ENCODE measurements at regions of chr1 and their contacts with region 1.

Region 1: GRCh38 chr1:94926915-94927404 is at the start of gene CNN3:
- DNase-seq: peak; percentile 61 to 96
- H3K4me3 ChIP-seq: peak within 1 kb of the TSS; percentile 91 to 98
- H3K27ac ChIP-seq: peak within 1 kb of the TSS; percentile 99 to 100
- H3K4me1 ChIP-seq: peaks cover 9 to 40% of the 10 kb centered on the region in 2 donors
- H3K27me3 ChIP-seq: no peaks in the 10 kb centered on the region
- CTCF ChIP-seq: no peak
- total RNA-seq, gene CNN3: 362 TPM

Region 2: GRCh38 chr1:94854458-94855306 is 72.3 kb before region 1 on chr1:
- intact Hi-C with region 1: loop called (anchors 1 kb)
- DNase-seq: peak; percentile 67 to 96
- H3K4me3 ChIP-seq: peak overlapping the region; percentile 46 to 61
- H3K27ac ChIP-seq: peak overlapping the region; percentile 68 to 73
- H3K4me1 ChIP-seq: peaks cover 0 to 16% of the 10 kb centered on the region in 2 donors
- H3K27me3 ChIP-seq: no peaks in the 10 kb centered on the region
- CTCF ChIP-seq: peak; percentile 93

Region 3: DNA sequence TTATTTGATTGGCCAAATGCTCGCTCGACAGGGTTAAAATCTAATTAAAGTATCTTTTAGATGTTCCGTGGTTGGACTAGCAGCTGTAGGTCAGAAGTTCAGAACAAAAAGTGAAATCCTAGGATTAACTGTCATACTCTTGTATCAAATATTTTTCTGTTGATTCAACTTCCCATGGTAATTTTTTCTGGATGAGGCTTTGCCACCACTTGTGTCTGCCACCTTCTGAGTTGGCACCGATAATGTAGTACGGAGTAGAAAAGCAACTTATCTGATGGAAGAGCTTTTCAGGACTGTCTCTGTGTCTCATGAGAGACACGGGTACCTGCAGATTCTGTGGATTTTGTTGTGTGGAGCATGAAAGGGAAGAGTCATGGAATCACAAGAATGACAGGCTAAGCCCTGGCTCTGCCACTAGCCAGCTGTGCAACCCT is 44.5 kb after region 1 on chr1:
- intact Hi-C with region 1: loop called (anchors 2 kb)
- DNase-seq: no peak
- H3K4me3 ChIP-seq: no peak overlapping the region
- H3K27ac ChIP-seq: peak overlapping the region; percentile 51 to 61
- H3K4me1 ChIP-seq: peaks cover 6 to 17% of the 10 kb centered on the region in 2 donors
- H3K27me3 ChIP-seq: no peaks in the 10 kb centered on the region
- CTCF ChIP-seq: no peak

Region 4: GRCh38 chr1:95043141-95043980 is 116.4 kb after region 1 on chr1:
- intact Hi-C with region 1: loop called (anchors 1 kb)
- DNase-seq: peak; percentile 16 to 94
- H3K4me3 ChIP-seq: no peak overlapping the region
- H3K27ac ChIP-seq: peak overlapping the region; percentile 35 to 38
- H3K4me1 ChIP-seq: peaks cover 0 to 11% of the 10 kb centered on the region in 2 donors
- H3K27me3 ChIP-seq: no peaks in the 10 kb centered on the region
- CTCF ChIP-seq: peak; percentile 98 to 99 (median 98)